ENCODE measurements at regions of chr10 and their contacts with region 1.

Region 1: GRCh38 chr10:95559471-95559870 is 1.7 kb downstream of the SORBS1 start:
- DNase-seq: no peak

Region 2: GRCh38 chr10:94607111-94607510 is 952.4 kb before region 1 on chr10:
- intact Hi-C with region 1: no loop called
- DNase-seq: no peak

Region 3: GRCh38 chr10:95069286-95069685 is 490.2 kb before region 1 on chr10 and contains the start of gene CYP2C8:
- intact Hi-C with region 1: no loop called
- DNase-seq: no peak
- total RNA-seq, gene CYP2C8: 0.32 to 0.57 TPM

Region 4: GRCh38 chr10:95430231-95430951 is 129.1 kb before region 1 on chr10:
- intact Hi-C with region 1: loop called in 1 of 2 experiments (anchors 5 kb)
- DNase-seq: no peak

Region 5: DNA sequence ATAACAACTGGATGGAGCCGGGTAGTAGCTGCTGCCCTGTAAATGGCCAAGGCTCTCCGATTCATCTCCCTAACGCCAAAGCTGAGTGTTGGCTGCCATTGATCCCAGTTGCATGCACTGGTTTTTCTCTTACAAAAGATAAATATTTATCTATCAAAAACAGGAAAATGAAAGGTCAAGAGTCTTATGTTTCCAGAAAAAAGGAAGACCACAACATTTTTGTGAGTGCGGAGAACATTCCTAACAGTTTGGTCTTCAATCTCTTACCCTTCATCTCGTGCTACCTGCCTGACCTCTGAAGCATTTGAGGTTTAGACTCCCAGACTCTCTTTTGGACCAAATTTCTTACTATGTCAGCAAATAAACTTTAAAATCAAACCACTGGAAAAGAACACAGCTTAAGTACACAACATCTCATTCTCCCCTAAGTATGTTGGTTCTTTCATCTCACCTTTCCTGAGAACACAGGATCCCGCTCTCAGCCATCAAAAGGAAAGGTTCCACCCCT is 59.9 kb before region 1 on chr10:
- intact Hi-C with region 1: loop called in 1 of 2 experiments (anchors 10 kb)
- DNase-seq: no peak

Region 6: DNA sequence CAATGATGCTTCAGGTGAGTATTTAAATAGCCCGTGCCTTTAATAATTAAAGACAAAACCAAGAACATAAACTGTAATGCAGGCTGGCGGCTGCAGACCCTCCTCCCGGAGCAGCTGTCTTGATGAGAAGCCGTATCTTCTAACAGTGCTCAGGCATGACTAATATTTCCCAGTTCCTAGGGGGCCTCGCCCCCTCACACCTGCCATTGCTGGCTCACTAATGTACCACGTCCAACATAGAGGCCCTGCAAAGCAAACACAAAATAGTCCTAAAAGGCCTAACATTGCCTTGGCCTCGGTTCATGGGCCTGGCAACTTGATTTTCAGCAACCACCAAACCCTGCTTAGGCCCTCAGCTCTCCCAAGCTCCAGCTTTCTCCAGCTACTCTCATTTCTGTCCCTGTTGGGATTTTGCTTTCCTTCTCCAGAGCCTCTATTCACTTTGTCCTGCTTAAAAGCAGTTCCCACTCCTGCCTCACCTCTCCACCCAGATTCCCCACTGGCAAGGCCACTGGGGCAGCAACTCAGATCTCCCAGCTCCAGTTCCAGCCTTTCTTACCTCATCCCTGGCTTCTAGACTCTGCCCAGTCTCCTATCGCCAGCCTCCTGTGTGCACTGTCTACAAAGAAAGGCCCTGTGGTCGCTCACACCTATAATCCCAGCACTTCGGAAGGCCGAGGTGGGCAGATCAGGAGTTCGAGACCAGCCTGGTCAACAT is 14.5 kb before region 1 on chr10:
- intact Hi-C with region 1: no loop called
- DNase-seq: no peak

Measured in posterior vena cava (tissue), 2 donors.